Testis (tissue), 5 donors: ENCODE measurements at regions of chr7 and their contacts with region 1.

Region 1: DNA sequence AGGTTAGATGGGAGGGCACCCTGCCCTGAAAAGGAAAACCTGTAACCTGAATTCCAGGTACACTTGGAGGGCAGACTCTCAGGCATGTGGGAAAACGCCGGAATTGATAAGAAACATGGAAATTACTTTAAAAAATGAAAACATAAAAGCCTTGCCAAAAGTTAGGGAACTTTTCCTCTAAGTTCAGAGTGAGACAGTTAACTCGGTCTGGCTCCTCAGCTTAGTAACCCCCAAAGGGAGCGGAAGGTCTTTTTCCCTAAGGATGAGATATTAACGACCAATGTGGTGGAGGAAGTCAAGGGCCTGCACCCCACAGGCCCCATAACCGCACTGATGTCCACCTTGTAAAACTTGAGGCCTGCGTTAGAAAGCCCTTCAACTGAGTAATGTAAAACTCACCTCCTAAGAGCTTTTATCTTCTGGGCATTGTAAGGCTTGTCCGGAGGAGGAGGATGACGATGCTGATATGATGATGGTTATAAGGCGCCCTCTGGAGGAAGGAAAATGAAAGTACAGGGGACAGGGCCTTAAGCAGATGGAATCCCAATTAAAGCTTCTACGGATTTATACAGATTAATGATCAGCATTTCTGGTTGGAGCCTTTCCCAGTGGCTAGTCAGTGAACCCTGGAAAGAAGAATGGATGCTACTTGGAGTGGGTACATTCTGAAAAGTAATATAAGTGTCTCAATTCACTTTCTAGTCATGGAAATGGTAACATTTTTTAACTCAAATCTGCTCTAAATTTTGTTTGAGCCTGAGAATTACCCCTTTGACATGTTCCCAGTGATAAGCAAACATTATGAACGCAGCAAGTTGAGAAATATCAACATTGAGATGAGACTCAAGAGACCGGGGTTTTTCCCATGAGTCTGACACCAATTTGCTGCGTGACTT is 694 bp downstream of the COL1A2 start:
- DNase-seq: peak; percentile 83
- H3K4me3 ChIP-seq: peak overlapping the region; percentile 73 to 74
- H3K27ac ChIP-seq: peak overlapping the region; percentile 78 to 91
- H3K4me1 ChIP-seq: peaks cover 24% of the 10 kb centered on the region
- H3K27me3 ChIP-seq: no peaks in the 10 kb centered on the region
- CTCF ChIP-seq: peak; percentile 86 to 94 (median 90)
- POLR2A ChIP-seq: no peak

Region 2: DNA sequence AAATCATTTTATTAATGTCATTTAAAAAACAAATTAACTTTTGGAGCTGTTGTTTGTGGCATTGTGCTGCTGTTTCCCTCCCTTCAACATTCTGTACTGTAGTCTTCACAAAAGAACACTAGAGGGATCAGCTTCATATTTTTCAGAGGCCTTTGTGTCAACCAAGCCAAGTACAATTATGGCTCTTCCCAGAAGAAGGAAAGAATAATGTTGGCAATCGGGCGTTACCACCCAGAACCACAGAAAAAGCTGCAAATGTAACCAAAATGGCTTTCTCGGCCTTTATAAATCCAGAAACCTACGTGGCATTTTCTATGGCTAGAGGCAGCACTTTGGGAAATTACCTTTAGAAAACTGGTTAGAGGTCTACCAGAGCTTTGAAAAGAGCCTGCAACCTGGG is 99.5 kb before region 1 on chr7:
- intact Hi-C with region 1: loop called (anchors 5 kb)
- DNase-seq: peak; percentile 20
- H3K4me3 ChIP-seq: no peak overlapping the region
- H3K27ac ChIP-seq: peak overlapping the region; percentile 53 to 80
- H3K4me1 ChIP-seq: peaks cover 40% of the 10 kb centered on the region
- H3K27me3 ChIP-seq: no peaks in the 10 kb centered on the region
- CTCF ChIP-seq: peak; percentile 35 to 65 (median 65)
- POLR2A ChIP-seq: no peak

Region 3: GRCh38 chr7:94492596-94492995 is 97.2 kb after region 1 on chr7:
- intact Hi-C with region 1: no loop called
- DNase-seq: no peak
- H3K4me3 ChIP-seq: no peak overlapping the region
- H3K27ac ChIP-seq: no peak overlapping the region
- H3K4me1 ChIP-seq: no peaks in the 10 kb centered on the region
- H3K27me3 ChIP-seq: no peaks in the 10 kb centered on the region
- CTCF ChIP-seq: no peak
- POLR2A ChIP-seq: no peak

Region 4: DNA sequence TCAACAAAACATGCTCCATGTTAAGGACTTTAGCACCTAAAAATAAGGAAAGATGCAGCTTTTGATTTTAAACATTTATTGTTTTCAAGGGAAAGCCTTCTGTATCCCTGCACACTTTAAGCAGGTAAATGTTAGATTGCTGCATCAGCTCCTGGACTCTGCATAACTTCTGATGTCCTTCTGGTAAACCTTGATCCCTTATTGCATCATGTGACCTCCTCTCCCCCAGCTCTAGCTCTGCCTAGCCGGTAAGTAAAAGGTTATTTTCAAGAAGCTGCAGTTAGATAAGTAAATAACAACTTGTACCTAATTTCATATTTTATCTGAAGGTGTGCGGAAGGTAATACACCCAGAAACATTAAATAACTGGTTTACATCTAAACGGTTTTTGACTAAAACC is 1163.5 kb after region 1 on chr7:
- intact Hi-C with region 1: no loop called
- DNase-seq: no peak
- H3K4me3 ChIP-seq: no peak overlapping the region
- H3K27ac ChIP-seq: no peak overlapping the region
- H3K4me1 ChIP-seq: no peaks in the 10 kb centered on the region
- H3K27me3 ChIP-seq: no peaks in the 10 kb centered on the region
- CTCF ChIP-seq: no peak
- POLR2A ChIP-seq: no peak